G401 (cell line): ENCODE measurements at regions of chr19 and their contacts with region 1.

Region 1: GRCh38 chr19:46967578-46968027 is 52.0 kb upstream of the NPAS1 start:
- DNase-seq: peak; percentile 51

Region 2: GRCh38 chr19:46813839-46814363 is 153.7 kb before region 1 on chr19:
- in situ Hi-C with region 1: no loop called
- DNase-seq: no peak

Region 3: GRCh38 chr19:46924874-46925547 is 42.6 kb before region 1 on chr19:
- in situ Hi-C with region 1: loop called (anchors 5 kb)
- DNase-seq: no peak

Region 4: GRCh38 chr19:47112997-47113849 is 145.6 kb after region 1 on chr19 and contains the start of gene ZC3H4:
- in situ Hi-C with region 1: no loop called
- DNase-seq: peak; percentile 99
- total RNA-seq, gene ZC3H4: 12.4 and 16.8 TPM in 2 replicates